ENCODE measurements at regions of chr15 and their contacts with region 1.

Region 1: GRCh38 chr15:74615508-74616365 is at the start of gene CLK3:
- DNase-seq: peak; percentile 98
- H3K4me3 ChIP-seq: peak within 1 kb of the TSS; percentile 69
- H3K27ac ChIP-seq: peak within 1 kb of the TSS; percentile 97
- H3K4me1 ChIP-seq: peaks cover 13% of the 10 kb centered on the region
- H3K27me3 ChIP-seq: no peaks in the 10 kb centered on the region
- CTCF ChIP-seq: no peak
- total RNA-seq, gene CLK3: 66.8 and 75.5 TPM in 2 replicates

Region 2: DNA sequence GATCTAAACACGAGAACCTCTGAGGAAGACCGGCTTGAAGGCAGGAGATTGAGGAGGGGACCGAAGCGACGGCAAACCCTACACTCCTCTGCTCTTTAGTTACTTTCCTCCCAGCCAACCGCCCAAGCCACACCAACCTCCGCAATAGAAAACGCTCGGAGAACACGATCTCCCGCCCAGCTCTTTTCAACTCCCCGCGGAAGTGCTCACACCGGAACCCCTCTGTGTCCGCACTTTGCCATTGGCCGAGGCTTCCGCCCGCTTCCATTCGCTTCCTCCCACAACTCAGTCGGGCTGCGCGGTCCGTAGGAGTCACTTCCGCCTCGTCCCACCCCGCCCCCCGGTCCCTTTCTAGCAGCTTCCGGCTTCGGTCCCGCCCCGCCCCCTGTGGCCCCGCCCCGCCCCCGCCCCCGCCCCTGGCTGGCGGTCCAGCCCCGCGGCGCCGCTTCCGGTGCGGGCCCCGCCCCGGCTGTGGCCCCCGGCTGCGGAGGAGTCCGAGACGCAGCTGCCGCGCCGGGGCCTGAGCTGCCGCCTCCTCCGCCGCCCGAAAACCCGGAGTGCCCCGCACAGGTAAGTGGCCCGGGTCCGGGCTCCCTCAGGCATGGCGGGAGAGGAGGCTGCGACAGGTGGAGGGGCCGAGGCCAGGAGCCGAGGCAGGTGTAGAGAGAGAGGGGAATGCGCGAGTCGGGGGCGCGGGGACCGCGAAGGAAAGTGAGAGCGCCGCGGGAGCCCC is 74.8 kb before region 1 on chr15 and contains the start of gene ARID3B:
- CTCF ChIA-PET with region 1: no interaction called
- POLR2A ChIA-PET with region 1: no interaction called
- intact Hi-C with region 1: loop called (anchors 2 kb)
- DNase-seq: peak; percentile 98
- H3K4me3 ChIP-seq: peak within 1 kb of the TSS; percentile 99
- H3K27ac ChIP-seq: peak within 1 kb of the TSS; percentile 93
- H3K4me1 ChIP-seq: peaks cover 21% of the 10 kb centered on the region
- H3K27me3 ChIP-seq: no peaks in the 10 kb centered on the region
- CTCF ChIP-seq: no peak
- total RNA-seq, gene ARID3B: 17.3 and 18.3 TPM in 2 replicates

Region 3: GRCh38 chr15:74642729-74643367 is 27.1 kb after region 1 on chr15:
- CTCF ChIA-PET with region 1: no interaction called
- POLR2A ChIA-PET with region 1: interaction called, 13 read pairs
- intact Hi-C with region 1: no loop called
- DNase-seq: peak; percentile 76
- H3K4me3 ChIP-seq: no peak overlapping the region
- H3K27ac ChIP-seq: peak overlapping the region; percentile 72
- H3K4me1 ChIP-seq: peaks cover 21% of the 10 kb centered on the region
- H3K27me3 ChIP-seq: no peaks in the 10 kb centered on the region
- CTCF ChIP-seq: no peak